MCF 10A (cell line): ENCODE measurements at regions of chr7 and their contacts with region 1.

Region 1: GRCh38 chr7:106112117-106112971 is at the start of gene SYPL1:
- DNase-seq: peak; percentile 92
- H3K4me3 Mint-ChIP-seq: peak within 1 kb of the TSS; percentile 88
- H3K27ac Mint-ChIP-seq: peak within 1 kb of the TSS; percentile 95
- H3K4me1 Mint-ChIP-seq: peaks cover 23% of the 10 kb centered on the region
- H3K27me3 Mint-ChIP-seq: no peaks in the 10 kb centered on the region
- CTCF ChIP-seq: no peak
- total RNA-seq, gene SYPL1: 77.6 and 92.1 TPM in 2 replicates

Region 2: GRCh38 chr7:106094800-106095199 is 17.5 kb before region 1 on chr7:
- CTCF ChIA-PET with region 1: interaction called, 3 read pairs
- POLR2A ChIA-PET with region 1: interaction called, 25 read pairs
- intact Hi-C with region 1: no loop called
- DNase-seq: peak; percentile 23
- H3K4me3 Mint-ChIP-seq: no peak overlapping the region
- H3K27ac Mint-ChIP-seq: no peak overlapping the region
- H3K4me1 Mint-ChIP-seq: peaks cover 11% of the 10 kb centered on the region
- H3K27me3 Mint-ChIP-seq: no peaks in the 10 kb centered on the region
- CTCF ChIP-seq: no peak

Region 3: DNA sequence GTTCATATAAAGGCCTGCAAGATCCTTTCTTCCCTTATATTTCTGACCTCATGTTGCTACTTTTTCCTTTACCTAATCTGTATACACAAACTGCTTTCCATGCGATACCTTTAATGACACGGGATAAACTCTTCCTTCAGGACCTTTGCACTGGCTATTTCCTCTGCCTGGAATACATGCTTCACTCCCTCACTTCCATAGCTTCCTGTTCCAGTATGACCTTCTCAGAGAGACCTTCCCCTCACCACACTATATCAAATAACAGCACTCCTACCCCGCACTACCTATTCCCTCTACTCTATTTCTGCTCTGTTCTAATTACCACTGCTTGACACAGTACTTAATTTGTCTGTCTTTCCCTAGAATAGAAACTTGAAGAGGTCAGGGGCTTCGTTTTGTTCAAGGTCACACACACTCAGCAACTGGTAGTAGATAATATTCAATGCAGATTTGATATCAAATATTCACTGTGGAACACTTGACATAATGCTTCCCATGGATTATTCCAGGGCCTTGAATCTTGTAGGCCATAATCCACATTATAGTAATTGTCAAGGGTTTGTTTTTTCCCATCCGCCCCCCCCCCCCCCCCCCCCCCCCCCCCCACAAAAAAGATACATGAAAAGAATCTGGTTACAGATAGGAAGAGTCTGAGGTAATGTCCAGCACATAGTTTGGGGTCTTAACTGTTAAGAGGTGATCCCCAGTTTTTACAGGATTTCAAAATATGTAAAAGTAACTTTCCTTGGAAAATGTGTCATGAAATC is 11.3 kb before region 1 on chr7:
- CTCF ChIA-PET with region 1: interaction called, 5 read pairs
- POLR2A ChIA-PET with region 1: interaction called, 21 read pairs
- intact Hi-C with region 1: no loop called
- DNase-seq: no peak
- H3K4me3 Mint-ChIP-seq: no peak overlapping the region
- H3K27ac Mint-ChIP-seq: no peak overlapping the region
- H3K4me1 Mint-ChIP-seq: peaks cover 50% of the 10 kb centered on the region
- H3K27me3 Mint-ChIP-seq: no peaks in the 10 kb centered on the region
- CTCF ChIP-seq: no peak

Region 4: DNA sequence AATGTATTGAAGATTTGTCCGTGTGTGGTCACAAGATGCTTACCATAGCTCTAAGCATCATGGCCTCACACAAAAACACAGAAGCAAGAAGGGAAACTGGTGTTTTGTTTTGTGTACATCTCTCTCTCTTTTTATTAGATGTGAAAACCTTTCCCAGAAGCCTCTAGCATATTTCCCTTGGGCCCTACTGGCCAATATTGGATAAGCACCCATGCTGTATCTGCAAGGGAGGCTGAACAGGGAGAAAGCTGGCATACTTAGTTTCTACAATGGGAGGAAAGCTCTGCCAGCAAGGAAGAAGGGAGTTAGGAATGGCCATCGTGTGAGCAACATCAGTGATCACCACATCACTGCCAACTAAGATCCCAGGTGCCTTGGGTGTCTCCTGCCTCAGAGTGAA is 182.0 kb after region 1 on chr7:
- CTCF ChIA-PET with region 1: no interaction called
- POLR2A ChIA-PET with region 1: no interaction called
- intact Hi-C with region 1: no loop called
- DNase-seq: no peak
- H3K4me3 Mint-ChIP-seq: no peak overlapping the region
- H3K27ac Mint-ChIP-seq: no peak overlapping the region
- H3K4me1 Mint-ChIP-seq: peaks cover 13% of the 10 kb centered on the region
- H3K27me3 Mint-ChIP-seq: no peaks in the 10 kb centered on the region
- CTCF ChIP-seq: no peak